AG04450 (cell line): ENCODE measurements at regions of chr2 and their contacts with region 1.

Region 1: GRCh38 chr2:110157153-110157793 is 41.7 kb upstream of the MALL start:
- DNase-seq: peak; percentile 23
- H3K4me3 ChIP-seq: no peak overlapping the region
- H3K27ac ChIP-seq: no peak overlapping the region
- H3K27me3 ChIP-seq: no peaks in the 10 kb centered on the region
- CTCF ChIP-seq: peak; percentile 88

Region 2: DNA sequence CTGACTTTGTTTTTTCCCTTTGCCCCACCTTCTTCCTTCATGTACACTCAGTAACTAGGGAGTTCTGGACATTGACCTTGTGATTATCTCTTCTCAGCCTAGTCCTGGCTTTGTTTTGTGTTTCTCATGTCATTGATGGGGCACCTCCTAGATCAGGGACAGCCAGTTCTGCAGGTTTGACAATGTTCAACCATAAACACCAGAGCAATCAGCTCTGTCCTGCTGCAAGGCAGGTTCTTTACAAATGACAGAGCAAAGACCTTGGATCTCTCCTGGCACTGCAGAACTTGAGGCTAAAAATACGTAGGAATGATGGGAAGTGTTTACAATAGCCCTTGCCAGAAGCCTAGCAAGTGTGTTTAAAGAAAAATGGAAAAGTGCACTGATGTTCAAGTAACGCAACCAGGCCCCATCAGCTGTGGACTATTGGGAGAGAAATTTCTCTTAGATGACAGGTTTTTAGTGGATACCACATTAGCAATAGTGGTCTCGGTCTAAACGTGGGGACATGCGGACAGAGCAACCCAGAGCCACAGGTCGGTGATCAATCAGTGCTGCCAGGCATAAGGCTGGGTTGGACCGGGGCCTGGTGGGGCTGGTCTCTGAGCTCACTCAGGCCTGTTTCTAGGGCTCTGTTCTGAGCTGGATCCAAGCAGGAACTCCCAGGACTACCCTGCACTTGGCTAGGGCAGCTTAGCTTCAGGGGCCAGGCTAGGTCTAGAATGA is 466.3 kb before region 1 on chr2:
- CTCF ChIA-PET with region 1: no interaction called
- POLR2A ChIA-PET with region 1: no interaction called
- DNase-seq: no peak
- H3K4me3 ChIP-seq: no peak overlapping the region
- H3K27ac ChIP-seq: peak overlapping the region; percentile 11
- H3K27me3 ChIP-seq: peaks cover 10% of the 10 kb centered on the region
- CTCF ChIP-seq: no peak

Region 3: GRCh38 chr2:110167326-110168000 is 10.2 kb after region 1 on chr2:
- CTCF ChIA-PET with region 1: interaction called, 20 read pairs
- POLR2A ChIA-PET with region 1: no interaction called
- DNase-seq: no peak
- H3K4me3 ChIP-seq: no peak overlapping the region
- H3K27ac ChIP-seq: no peak overlapping the region
- H3K27me3 ChIP-seq: no peaks in the 10 kb centered on the region
- CTCF ChIP-seq: no peak

Region 4: DNA sequence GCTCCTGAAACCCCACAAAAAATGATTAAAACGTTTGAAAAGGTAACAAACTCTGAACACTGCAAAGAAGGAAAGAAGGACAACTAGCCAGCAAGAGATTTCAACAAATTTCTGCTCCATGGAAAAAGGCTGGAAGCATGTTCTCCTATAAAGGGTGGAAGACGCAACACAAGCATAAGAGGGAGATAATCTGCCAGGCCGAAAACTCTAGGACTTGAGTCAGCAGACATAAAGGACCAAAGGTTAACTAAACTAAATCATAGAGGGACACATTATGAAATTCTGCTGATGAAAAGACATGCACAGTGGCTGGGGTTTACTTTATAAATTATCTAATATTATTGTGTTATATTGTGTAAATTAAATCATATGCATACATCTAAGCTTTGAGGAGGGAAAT is 40.7 kb after region 1 on chr2:
- CTCF ChIA-PET with region 1: no interaction called
- POLR2A ChIA-PET with region 1: no interaction called
- DNase-seq: no peak
- H3K4me3 ChIP-seq: no peak overlapping the region
- H3K27ac ChIP-seq: no peak overlapping the region
- H3K27me3 ChIP-seq: no peaks in the 10 kb centered on the region
- CTCF ChIP-seq: no peak

Region 5: DNA sequence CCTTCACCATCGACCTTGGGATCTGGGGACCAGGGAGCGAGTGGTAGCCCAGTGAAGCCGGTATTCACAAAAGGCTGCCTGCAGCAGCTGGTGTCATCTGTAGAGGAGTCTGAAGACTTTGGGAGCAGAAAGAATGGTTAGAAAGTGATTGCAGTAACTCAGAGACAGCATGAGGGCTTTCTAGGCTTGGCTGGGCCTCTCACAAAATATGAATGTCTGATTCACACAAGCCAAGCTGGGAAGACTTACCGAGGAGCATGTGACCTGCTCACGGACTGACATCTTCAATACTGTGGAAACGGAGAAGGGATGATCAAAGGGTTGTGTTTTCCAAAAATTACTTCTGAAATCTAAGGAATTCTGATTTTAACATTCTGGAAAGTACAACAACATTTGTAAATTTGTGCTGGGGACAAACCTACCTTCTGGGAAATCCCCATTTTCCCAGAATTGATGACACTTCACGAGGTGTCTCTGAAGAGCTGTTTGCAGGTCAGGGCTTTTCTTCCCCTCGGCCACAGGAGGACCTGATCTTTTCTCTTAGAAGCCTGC is 686.8 kb after region 1 on chr2:
- CTCF ChIA-PET with region 1: no interaction called
- POLR2A ChIA-PET with region 1: no interaction called
- DNase-seq: no peak
- H3K4me3 ChIP-seq: no peak overlapping the region
- H3K27ac ChIP-seq: no peak overlapping the region
- H3K27me3 ChIP-seq: peaks cover 23% of the 10 kb centered on the region
- CTCF ChIP-seq: no peak